AG04449 (cell line): ENCODE measurements at regions of chr18 and their contacts with region 1.

Region 1: DNA sequence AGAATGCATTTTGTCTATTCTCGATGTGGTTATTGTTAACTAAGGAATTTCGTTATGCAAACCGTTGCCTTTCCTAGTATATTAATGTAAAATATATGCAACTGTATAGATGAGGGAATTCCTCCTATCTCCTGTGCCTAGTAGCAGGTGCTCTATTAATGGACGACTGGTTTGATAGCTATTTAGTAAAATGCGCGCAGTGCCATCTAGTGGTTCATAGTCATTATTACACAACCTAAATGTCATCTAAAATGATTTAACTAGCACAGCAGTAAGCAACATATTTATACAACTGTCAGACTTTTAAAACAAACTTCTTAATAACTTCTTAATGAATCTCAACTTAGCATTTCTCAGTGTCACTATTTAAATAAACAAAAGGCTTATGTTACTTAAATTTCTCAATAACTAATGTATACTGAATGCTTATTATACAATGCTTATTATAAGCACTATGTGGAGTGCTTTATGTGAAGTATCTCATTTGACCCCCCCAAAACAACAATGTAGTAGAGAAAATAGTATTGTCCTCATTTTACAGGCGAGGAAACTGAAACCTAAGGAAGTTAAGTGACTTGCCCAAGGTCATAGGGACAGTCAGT is 77.9 kb downstream of the DTNA start:
- DNase-seq: peak; percentile 19
- H3K4me3 ChIP-seq: no peak overlapping the region
- CTCF ChIP-seq: peak; percentile 52

Region 2: GRCh38 chr18:34122724-34123334 is 665.2 kb before region 1 on chr18:
- CTCF ChIA-PET with region 1: interaction called, 20 read pairs
- POLR2A ChIA-PET with region 1: no interaction called
- DNase-seq: no peak
- H3K4me3 ChIP-seq: no peak overlapping the region
- CTCF ChIP-seq: peak; percentile 78

Region 3: DNA sequence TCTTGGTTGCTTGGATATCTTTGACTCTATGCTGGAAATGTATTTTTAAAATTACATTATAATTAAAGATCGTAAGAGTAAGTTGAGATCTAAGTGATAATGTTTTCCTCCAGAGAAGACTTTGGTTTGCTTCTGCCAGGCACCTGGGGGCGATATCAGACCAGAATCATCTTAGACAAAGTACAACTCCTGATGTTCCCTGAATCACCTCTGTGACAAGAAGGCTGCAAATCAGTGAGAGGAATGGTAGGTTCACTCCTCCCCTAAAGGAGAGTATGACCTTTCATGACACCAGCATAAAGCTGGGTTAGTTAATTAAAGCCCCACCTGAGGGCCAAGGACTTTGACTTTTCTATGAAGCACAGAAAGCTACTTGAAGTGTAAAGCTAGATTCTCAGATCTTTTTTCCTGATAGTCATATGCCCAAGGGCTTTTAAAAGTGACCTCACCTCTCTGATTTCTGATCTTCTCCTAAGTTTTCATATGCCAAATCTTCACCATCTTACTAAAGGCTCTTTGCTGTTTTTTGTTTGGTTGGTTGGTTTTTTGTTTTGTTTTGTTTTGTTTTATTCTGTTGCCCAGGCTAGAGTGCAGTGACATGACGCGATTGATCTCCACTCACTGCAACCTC is 192.2 kb before region 1 on chr18:
- CTCF ChIA-PET with region 1: interaction called, 31 read pairs
- POLR2A ChIA-PET with region 1: no interaction called
- DNase-seq: no peak
- H3K4me3 ChIP-seq: no peak overlapping the region
- CTCF ChIP-seq: peak; percentile 45

Region 4: GRCh38 chr18:34701911-34702310 is 86.1 kb before region 1 on chr18:
- CTCF ChIA-PET with region 1: no interaction called
- POLR2A ChIA-PET with region 1: no interaction called
- DNase-seq: no peak
- H3K4me3 ChIP-seq: no peak overlapping the region
- CTCF ChIP-seq: no peak

Region 5: DNA sequence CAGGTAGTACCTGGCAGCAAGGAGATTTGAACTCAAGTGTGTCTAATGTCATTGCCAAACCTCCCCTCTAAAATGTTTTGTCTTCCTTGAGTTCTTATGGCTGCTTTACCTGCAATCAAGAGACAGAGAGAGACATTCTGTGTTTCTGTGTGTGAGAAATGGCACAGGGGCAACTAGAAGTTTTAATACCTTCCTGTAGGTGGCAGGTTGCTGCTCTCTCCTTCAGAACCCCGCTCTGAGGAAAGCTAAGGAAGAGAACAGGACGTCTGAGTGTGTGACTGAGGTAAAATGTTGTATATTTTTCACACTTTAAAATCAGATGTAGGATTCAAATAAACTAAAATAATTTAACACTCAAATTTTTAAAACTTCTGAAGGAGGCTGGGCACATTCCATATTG is 58.8 kb before region 1 on chr18:
- CTCF ChIA-PET with region 1: interaction called, 14 read pairs
- POLR2A ChIA-PET with region 1: no interaction called
- DNase-seq: no peak
- H3K4me3 ChIP-seq: no peak overlapping the region
- CTCF ChIP-seq: peak; percentile 48

Region 6: DNA sequence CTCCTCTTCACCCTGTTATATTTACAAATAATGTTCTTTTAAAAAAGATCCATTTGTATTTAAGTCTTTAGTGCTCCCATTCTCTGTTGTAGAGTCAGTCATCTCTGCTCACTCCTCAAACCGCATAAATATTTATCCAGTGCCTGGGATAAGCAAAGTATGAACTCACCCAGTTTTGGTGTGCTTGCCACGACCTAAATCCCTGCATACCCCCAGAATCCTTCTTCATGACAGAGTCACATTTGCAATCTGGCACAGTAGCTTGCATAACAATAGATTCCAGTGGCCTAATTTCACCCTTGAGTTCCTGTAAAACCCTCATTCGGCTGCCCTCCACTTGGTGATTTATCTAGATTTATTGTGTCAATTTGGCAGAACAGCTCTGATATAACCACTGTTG is 14.9 kb after region 1 on chr18:
- CTCF ChIA-PET with region 1: interaction called, 14 read pairs
- POLR2A ChIA-PET with region 1: no interaction called
- DNase-seq: no peak
- H3K4me3 ChIP-seq: no peak overlapping the region
- CTCF ChIP-seq: no peak